ENCODE measurements at regions of chr7 and their contacts with region 1.

Region 1: DNA sequence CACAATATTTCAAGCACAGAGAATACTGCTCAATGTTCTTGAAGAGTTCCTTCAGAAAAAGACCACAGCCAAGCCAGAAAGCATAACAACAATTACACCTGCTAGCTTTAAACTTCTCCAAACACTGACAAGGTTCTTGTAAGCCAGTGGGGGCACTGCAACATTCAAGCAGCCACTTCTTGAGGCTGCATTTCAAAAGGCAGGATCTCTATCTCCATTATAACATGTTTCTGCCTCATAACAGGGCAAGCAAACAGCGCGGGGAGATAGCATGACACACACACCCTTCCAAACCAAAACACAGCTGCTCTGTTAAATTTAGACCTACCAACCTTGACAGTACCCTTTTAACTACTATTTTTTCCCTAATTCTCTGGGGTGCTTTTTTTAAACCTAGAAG is 30.8 kb downstream of the CHCHD3 start:
- DNase-seq: peak; percentile 68
- ATAC-seq: no peak; the same call in 1 of the 2 replicates
- H3K4me3 ChIP-seq: no peak overlapping the region
- H3K27ac ChIP-seq: no peak overlapping the region
- H3K4me1 ChIP-seq: peaks cover 16% of the 10 kb centered on the region
- H3K27me3 ChIP-seq: no peaks in the 10 kb centered on the region
- CTCF ChIP-seq: 0 out of 2 replicates have a peak, but pooled peaks have one; percentile 23
- POLR2A ChIP-seq: no peak
- RAD21 ChIP-seq: peak; percentile 25; the same call in 1 of the 2 replicates

Region 2: GRCh38 chr7:132666071-132666774 is 384.8 kb before region 1 on chr7:
- CTCF ChIA-PET with region 1: no interaction called
- POLR2A ChIA-PET with region 1: no interaction called
- dilution Hi-C with region 1: no loop called
- in situ Hi-C with region 1: no loop called
- intact Hi-C with region 1: no loop called
- DNase-seq: peak; percentile 5
- ATAC-seq: no peak
- H3K4me3 ChIP-seq: no peak overlapping the region
- H3K27ac ChIP-seq: no peak overlapping the region
- H3K4me1 ChIP-seq: no peaks in the 10 kb centered on the region
- H3K27me3 ChIP-seq: no peaks in the 10 kb centered on the region
- CTCF ChIP-seq: no peak
- POLR2A ChIP-seq: no peak
- RAD21 ChIP-seq: no peak

Region 3: DNA sequence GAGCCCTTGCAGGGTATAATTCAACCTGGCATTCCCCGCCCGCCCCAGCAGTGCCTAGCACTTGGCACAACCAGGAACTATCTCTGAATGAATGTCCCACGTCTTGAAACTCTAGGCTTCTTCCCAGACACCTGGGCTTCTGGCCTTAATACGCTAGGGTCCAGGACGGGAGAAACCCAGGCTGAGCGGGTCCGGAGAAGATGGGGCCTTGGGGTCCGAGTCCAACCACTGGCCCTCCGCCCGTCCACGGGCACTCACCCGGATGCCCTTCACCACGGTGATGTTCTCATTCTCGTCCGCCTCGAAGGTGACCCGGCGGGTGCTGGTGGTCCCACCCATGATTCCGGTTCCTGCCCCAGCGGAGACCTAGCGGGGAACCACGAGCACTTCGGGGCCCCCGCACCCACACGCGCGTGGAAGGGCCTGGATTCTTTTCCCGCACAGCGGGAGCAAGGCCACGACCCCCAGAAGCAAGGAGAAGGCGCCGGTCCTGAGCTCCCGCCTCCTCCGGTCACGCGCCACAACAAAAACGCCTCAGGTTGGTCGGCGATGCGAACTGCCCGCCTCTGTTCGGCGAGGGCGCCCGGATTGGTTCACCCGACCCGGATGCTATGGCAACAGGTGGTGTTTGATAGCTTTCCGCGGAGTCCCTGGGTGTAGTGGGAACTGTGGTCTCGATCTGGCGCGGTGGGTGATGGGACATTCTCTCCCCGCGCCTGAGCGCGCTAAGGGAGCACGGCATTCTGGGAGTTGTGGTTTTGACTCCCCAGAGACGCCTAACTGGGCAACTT is 30.7 kb after region 1 on chr7 and contains the start of gene CHCHD3:
- CTCF ChIA-PET with region 1: no interaction called
- POLR2A ChIA-PET with region 1: no interaction called
- dilution Hi-C with region 1: no loop called
- in situ Hi-C with region 1: no loop called
- intact Hi-C with region 1: loop called (anchors 2 kb)
- DNase-seq: peak; percentile 98
- ATAC-seq: peak; percentile 99
- H3K4me3 ChIP-seq: peak within 1 kb of the TSS; percentile 79
- H3K27ac ChIP-seq: peak within 1 kb of the TSS; percentile 82
- H3K4me1 ChIP-seq: peaks cover 2% of the 10 kb centered on the region; the same call in 1 of the 2 replicates
- H3K27me3 ChIP-seq: no peaks in the 10 kb centered on the region
- CTCF ChIP-seq: no peak
- POLR2A ChIP-seq: peak; percentile 43; the same call in 1 of the 2 replicates
- RAD21 ChIP-seq: no peak
- total RNA-seq, gene CHCHD3: 122 and 141 TPM in 2 replicates

Region 4: GRCh38 chr7:133180717-133181116 is 129.7 kb after region 1 on chr7:
- CTCF ChIA-PET with region 1: no interaction called
- POLR2A ChIA-PET with region 1: no interaction called
- dilution Hi-C with region 1: no loop called
- in situ Hi-C with region 1: no loop called
- intact Hi-C with region 1: no loop called
- DNase-seq: no peak
- ATAC-seq: no peak
- H3K4me3 ChIP-seq: no peak overlapping the region
- H3K27ac ChIP-seq: no peak overlapping the region
- H3K4me1 ChIP-seq: no peaks in the 10 kb centered on the region
- H3K27me3 ChIP-seq: peaks cover 2% of the 10 kb centered on the region; the same call in 1 of the 2 replicates
- CTCF ChIP-seq: no peak
- POLR2A ChIP-seq: no peak
- RAD21 ChIP-seq: no peak

Measured in IMR-90 (cell line).